OCI-LY7 (cell line): ENCODE measurements at regions of chr6 and their contacts with region 1.

Region 1: GRCh38 chr6:17156112-17156921 is 54.5 kb downstream of the STMND1 start:
- DNase-seq: peak; percentile 67
- H3K4me3 ChIP-seq: no peak overlapping the region
- H3K27ac ChIP-seq: no peak overlapping the region
- H3K4me1 ChIP-seq: no peaks in the 10 kb centered on the region
- CTCF ChIP-seq: peak; percentile 94

Region 2: DNA sequence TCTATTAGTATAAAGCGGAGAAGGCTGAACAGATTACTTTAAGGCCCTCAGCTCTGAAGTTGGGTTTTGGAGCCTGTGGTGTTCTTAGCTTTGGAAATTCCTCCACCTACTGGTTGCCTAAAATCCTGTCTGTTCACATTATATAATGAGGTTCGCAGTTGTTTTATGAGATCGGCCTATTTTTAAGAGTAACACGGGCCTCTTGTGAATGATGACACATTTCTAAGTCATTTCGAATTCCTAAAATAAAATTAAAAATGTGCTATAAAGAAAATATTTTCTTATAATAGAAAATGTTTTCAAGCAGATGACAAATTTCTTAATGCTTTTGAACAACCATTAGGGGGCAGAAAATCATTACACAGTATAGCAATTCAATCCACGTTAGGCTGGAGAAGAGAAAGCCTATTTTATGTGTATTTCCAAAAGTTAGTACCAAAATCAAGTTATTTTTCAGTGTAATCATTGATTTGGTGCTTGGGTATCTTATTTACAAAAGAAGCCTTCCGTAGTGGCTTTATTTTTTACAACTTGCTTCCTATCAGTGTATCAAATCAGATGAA is 428.0 kb after region 1 on chr6:
- CTCF ChIA-PET with region 1: no interaction called
- POLR2A ChIA-PET with region 1: no interaction called
- intact Hi-C with region 1: loop called (anchors 1 kb)
- DNase-seq: peak; percentile 62
- H3K4me3 ChIP-seq: no peak overlapping the region
- H3K27ac ChIP-seq: no peak overlapping the region
- H3K4me1 ChIP-seq: peaks cover 3% of the 10 kb centered on the region
- CTCF ChIP-seq: peak; percentile 100

Region 3: GRCh38 chr6:17808609-17809008 is 652.3 kb after region 1 on chr6:
- CTCF ChIA-PET with region 1: no interaction called
- POLR2A ChIA-PET with region 1: no interaction called
- intact Hi-C with region 1: loop called (anchors 2 kb)
- DNase-seq: no peak
- H3K4me3 ChIP-seq: no peak overlapping the region
- H3K27ac ChIP-seq: no peak overlapping the region
- H3K4me1 ChIP-seq: no peaks in the 10 kb centered on the region
- CTCF ChIP-seq: no peak

Region 4: GRCh38 chr6:17820055-17820454 is 663.7 kb after region 1 on chr6:
- CTCF ChIA-PET with region 1: no interaction called
- POLR2A ChIA-PET with region 1: no interaction called
- intact Hi-C with region 1: loop called (anchors 2 kb)
- DNase-seq: no peak
- H3K4me3 ChIP-seq: no peak overlapping the region
- H3K27ac ChIP-seq: no peak overlapping the region
- H3K4me1 ChIP-seq: no peaks in the 10 kb centered on the region
- CTCF ChIP-seq: no peak